Activated T-helper 2 cell treated with anti-CD3 and anti-CD28 coated beads, Interferon-gamma antibody, Interleukin-2, Interleukin-4, amounts not matched to agents 10 μg/mL and 5 μg/mL and 100 μg/mL, durations not matched to agents 14 hours and 24 hours and 36 hours (primary cell): ENCODE measurements at regions of chr12 and their contacts with region 1.

Region 1: GRCh38 chr12:65602610-65603295 is 221.5 kb upstream of the HMGA2 start:
- DNase-seq: peak; percentile 12
- H3K4me3 Mint-ChIP-seq: no peak overlapping the region
- H3K27ac Mint-ChIP-seq: no peak overlapping the region
- H3K4me1 Mint-ChIP-seq: peaks cover 6% of the 10 kb centered on the region
- H3K27me3 Mint-ChIP-seq: peaks cover 7% of the 10 kb centered on the region

Region 2: GRCh38 chr12:65666876-65667275 is 64.1 kb after region 1 on chr12:
- intact Hi-C with region 1: loop called (anchors 2 kb)
- DNase-seq: no peak
- H3K4me3 Mint-ChIP-seq: no peak overlapping the region
- H3K27ac Mint-ChIP-seq: peak overlapping the region; percentile 80
- H3K4me1 Mint-ChIP-seq: peaks cover 21% of the 10 kb centered on the region
- H3K27me3 Mint-ChIP-seq: peaks cover 12% of the 10 kb centered on the region

Region 3: DNA sequence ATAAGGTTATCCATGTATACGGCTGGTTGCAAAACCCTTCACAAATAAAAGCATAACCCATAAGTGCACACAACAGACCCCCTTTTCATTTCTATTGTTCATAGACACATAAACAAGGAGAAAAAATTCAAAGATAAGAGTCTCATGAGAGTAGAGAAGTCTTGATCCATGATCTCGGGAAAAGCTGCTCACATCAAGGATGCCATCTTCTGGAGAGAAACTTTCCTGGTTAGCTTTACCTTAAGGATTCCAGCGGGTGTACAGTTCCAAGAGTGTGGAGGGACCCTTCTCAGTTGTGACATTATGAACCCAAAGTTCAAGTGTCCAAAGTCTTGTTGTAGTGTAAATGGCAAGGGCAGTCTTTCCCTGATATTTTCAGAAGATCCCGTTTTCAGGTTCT is 383.3 kb after region 1 on chr12:
- intact Hi-C with region 1: loop called (anchors 2 kb)
- DNase-seq: no peak
- H3K4me3 Mint-ChIP-seq: no peak overlapping the region
- H3K27ac Mint-ChIP-seq: no peak overlapping the region
- H3K4me1 Mint-ChIP-seq: no peaks in the 10 kb centered on the region
- H3K27me3 Mint-ChIP-seq: peaks cover 8% of the 10 kb centered on the region

Region 4: GRCh38 chr12:66087365-66087943 is 484.7 kb after region 1 on chr12:
- intact Hi-C with region 1: loop called (anchors 2 kb)
- DNase-seq: peak; percentile 17
- H3K4me3 Mint-ChIP-seq: no peak overlapping the region
- H3K27ac Mint-ChIP-seq: no peak overlapping the region
- H3K4me1 Mint-ChIP-seq: no peaks in the 10 kb centered on the region
- H3K27me3 Mint-ChIP-seq: peaks cover 23% of the 10 kb centered on the region